H1 (cell line): ENCODE measurements at regions of chr4 and their contacts with region 1.

Region 1: GRCh38 chr4:52983563-52984303 is 121.6 kb downstream of the RASL11B start:
- DNase-seq: no peak
- H3K4me3 ChIP-seq: no peak overlapping the region
- H3K27ac ChIP-seq: no peak overlapping the region
- H3K4me1 ChIP-seq: no peaks in the 10 kb centered on the region; a peak in 1 of 7 replicates
- H3K27me3 ChIP-seq: no peaks in the 10 kb centered on the region
- CTCF ChIP-seq: peak in 2 of 3 experiments; percentile 45 to 52; a peak in 2 of 4 replicates
- EP300 ChIP-seq: no peak
- POLR2A ChIP-seq: no peak
- RAD21 ChIP-seq: peak; percentile 76 to 78

Region 2: GRCh38 chr4:52376132-52376704 is 607.5 kb before region 1 on chr4:
- CTCF ChIA-PET with region 1: interaction called, 44 read pairs
- POLR2A ChIA-PET with region 1: no interaction called
- DNase-seq: no peak
- H3K4me3 ChIP-seq: no peak overlapping the region
- H3K27ac ChIP-seq: no peak overlapping the region
- H3K4me1 ChIP-seq: peaks cover 0 to 8% (median 5%) of the 10 kb centered on the region in 4 experiments; a peak in 6 of 7 replicates
- H3K27me3 ChIP-seq: no peaks in the 10 kb centered on the region
- CTCF ChIP-seq: peak in 2 of 3 experiments; percentile 33 to 50; a peak in 2 of 4 replicates
- EP300 ChIP-seq: no peak
- POLR2A ChIP-seq: no peak
- RAD21 ChIP-seq: peak; percentile 74 to 76

Region 3: DNA sequence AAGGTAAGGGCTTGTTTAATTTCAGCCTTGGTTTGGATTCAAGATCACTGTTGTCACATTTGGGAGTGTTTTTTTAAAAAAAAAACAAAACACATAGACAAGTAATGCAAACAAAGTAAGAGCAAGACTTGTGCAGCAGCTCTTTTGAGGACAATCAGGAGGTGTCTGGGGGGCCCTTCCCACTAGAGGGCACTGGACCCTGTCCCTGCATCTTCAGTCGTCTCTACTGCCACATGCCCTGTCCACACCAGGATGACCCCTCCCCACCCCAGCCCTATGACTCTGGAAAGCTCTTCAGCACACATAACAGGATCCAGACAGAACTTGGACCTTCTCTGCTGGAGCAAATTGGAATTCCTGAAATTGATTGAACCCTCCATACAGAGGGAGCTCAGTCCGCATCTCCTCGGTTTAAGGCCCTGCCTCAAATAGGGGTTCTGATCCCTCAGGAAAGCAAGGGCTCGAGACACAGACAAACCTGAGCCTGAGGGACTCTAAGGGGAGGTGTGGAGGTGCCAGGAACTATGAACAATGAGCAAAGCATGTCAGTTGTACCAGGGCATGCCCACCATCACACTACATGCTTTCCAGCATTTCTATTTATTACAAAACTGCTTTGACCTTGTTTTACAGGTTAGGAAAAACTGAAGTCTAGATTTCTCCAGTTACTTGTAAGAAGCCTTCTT is 395.5 kb before region 1 on chr4:
- CTCF ChIA-PET with region 1: interaction called, 54 read pairs
- POLR2A ChIA-PET with region 1: no interaction called
- DNase-seq: peak; percentile 15 to 70
- H3K4me3 ChIP-seq: no peak overlapping the region
- H3K27ac ChIP-seq: no peak overlapping the region
- H3K4me1 ChIP-seq: no peaks in the 10 kb centered on the region
- H3K27me3 ChIP-seq: no peaks in the 10 kb centered on the region
- CTCF ChIP-seq: peak; percentile 60 to 85 (median 79)
- EP300 ChIP-seq: no peak
- POLR2A ChIP-seq: no peak
- RAD21 ChIP-seq: peak; percentile 72 to 77

Region 4: DNA sequence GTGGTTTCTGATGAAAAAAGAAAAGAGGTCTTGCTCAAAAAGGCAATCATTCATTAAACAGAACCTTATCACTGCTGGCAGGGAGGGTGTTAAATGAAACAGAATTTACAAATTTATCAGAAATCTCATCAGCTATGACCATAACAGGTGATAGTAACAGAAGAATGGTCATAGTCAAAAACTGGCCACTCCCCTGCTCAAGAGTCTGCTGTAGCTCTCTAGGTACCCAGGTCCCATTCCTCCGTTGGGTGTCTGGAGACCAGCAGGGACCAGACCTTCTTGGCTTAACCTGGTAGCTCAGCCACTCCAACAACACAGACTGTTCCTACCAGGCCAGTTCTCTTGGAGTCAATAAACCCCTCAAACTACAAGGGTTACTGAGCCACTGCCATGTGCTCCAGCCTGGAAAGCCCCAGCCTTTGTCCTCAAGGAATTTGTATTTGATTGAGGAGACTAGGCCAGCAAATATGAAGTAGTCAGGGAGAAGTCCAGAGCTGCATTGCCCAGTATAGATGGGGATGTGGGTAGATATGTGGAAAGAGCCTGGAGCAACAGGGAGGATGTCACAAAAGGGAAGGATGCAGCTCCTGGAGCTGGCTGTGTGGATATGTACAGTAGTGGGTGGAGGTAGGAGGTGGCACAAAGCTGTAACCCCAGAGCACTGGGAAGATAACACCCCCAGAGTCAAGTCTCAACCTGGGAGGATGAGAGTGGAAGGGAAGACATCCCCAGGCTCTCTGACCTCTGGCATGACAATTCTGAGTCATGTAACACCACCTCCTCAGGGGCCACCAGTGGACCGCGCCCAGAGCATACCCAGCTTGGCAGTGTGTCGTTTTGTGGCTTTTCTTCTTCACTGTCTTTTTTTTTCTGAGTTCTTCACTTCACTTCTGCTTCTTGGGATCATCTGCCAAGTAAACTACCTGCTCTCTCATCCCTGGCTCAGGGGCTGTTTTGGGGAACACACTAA is 99.7 kb before region 1 on chr4:
- CTCF ChIA-PET with region 1: interaction called, 24 read pairs
- POLR2A ChIA-PET with region 1: no interaction called
- DNase-seq: no peak
- H3K4me3 ChIP-seq: no peak overlapping the region
- H3K27ac ChIP-seq: no peak overlapping the region
- H3K4me1 ChIP-seq: peaks cover 2 to 16% (median 9%) of the 10 kb centered on the region in 4 experiments; a peak in 5 of 7 replicates
- H3K27me3 ChIP-seq: no peaks in the 10 kb centered on the region
- CTCF ChIP-seq: no peak
- EP300 ChIP-seq: no peak
- POLR2A ChIP-seq: no peak
- RAD21 ChIP-seq: no peak

Region 5: DNA sequence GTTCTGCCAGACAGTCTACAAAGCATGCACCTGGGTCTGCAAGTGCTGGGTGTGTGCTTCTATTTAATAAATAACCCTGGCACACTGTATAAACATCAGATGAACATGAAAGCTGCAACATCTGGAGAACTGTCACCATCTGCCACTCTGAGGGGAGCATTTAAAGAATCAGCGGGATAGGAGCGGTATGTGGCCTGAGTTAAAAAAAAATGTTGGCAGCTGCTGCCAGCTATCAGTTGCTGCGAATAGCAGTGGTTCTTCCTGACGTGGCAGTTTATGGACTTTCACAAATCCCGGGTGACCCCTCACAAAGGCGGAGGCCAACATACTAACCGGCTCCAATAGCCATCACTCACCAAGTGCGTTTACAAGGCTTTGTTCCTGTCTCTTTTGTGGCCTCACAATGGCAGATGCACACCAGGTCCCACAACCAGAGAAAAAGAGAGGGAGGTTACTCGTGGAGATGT is 26.5 kb before region 1 on chr4:
- CTCF ChIA-PET with region 1: no interaction called
- POLR2A ChIA-PET with region 1: no interaction called
- DNase-seq: no peak
- H3K4me3 ChIP-seq: no peak overlapping the region
- H3K27ac ChIP-seq: no peak overlapping the region
- H3K4me1 ChIP-seq: peaks cover 0 to 10% (median 3%) of the 10 kb centered on the region in 4 experiments; a peak in 3 of 7 replicates
- H3K27me3 ChIP-seq: no peaks in the 10 kb centered on the region
- CTCF ChIP-seq: no peak
- EP300 ChIP-seq: no peak
- POLR2A ChIP-seq: no peak
- RAD21 ChIP-seq: no peak

Region 6: DNA sequence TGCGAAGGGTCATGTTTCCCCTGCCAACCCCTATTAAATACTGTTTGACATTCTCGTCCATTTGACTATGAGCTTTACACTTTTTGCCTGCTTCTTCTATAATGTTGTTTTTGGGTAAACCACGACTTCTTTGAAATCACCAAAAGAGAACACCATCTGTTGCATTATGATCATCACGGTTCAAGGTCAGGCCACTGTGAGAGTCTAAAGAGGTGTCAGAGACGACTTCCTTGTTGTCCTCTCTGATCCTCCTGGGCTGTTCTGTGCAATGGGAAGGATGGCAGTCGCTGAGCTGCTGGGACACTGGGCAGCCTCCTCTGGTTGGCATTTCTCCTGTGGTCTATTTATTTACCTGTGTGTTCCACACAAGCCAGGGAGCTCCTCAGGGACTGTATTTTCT is 15.9 kb after region 1 on chr4:
- CTCF ChIA-PET with region 1: interaction called, 11 read pairs
- POLR2A ChIA-PET with region 1: no interaction called
- DNase-seq: no peak
- H3K4me3 ChIP-seq: no peak overlapping the region
- H3K27ac ChIP-seq: no peak overlapping the region
- H3K4me1 ChIP-seq: no peaks in the 10 kb centered on the region
- H3K27me3 ChIP-seq: no peaks in the 10 kb centered on the region
- CTCF ChIP-seq: no peak
- EP300 ChIP-seq: no peak
- POLR2A ChIP-seq: no peak
- RAD21 ChIP-seq: no peak